Pancreas (tissue), 10 donors: ENCODE measurements at regions of chr1 and their contacts with region 1.

Region 1: GRCh38 chr1:183318433-183318832 is 99.7 kb downstream of the NMNAT2 start:
- DNase-seq: peak; percentile 69 to 86 (median 76)
- ATAC-seq: peak; percentile 98 to 99 (median 99)
- H3K4me3 ChIP-seq: no peak overlapping the region
- H3K27ac ChIP-seq: peak overlapping the region in 2 of 4 donors; percentile 63 to 78
- H3K4me1 ChIP-seq: peaks cover 0 to 7% (median 0%) of the 10 kb centered on the region in 3 donors
- H3K27me3 ChIP-seq: no peaks in the 10 kb centered on the region
- CTCF ChIP-seq: peak in 3 of 4 donors; percentile 24 to 40 (median 27)

Region 2: GRCh38 chr1:183281553-183282091 is 36.8 kb before region 1 on chr1:
- intact Hi-C with region 1: loop called in 2 of 3 experiments (anchors 5 kb)
- DNase-seq: peak; percentile 86 to 95 (median 90)
- ATAC-seq: peak; percentile 91 to 95 (median 92)
- H3K4me3 ChIP-seq: no peak overlapping the region
- H3K27ac ChIP-seq: peak overlapping the region; percentile 39 to 81 (median 60)
- H3K4me1 ChIP-seq: peaks cover 12 to 15% (median 15%) of the 10 kb centered on the region in 3 donors
- H3K27me3 ChIP-seq: no peaks in the 10 kb centered on the region
- CTCF ChIP-seq: peak; percentile 87 to 93 (median 90)